ENCODE measurements at regions of chr3 and their contacts with region 1.

Region 1: GRCh38 chr3:155323063-155323666 is 29.7 kb upstream of the STRIT1 start:
- DNase-seq: peak in 1 of 2 donors; percentile 36
- ATAC-seq: peak; percentile 59 to 80 (median 66)
- H3K4me3 ChIP-seq: no peak overlapping the region
- H3K27ac ChIP-seq: no peak overlapping the region
- H3K4me1 ChIP-seq: no peaks in the 10 kb centered on the region
- H3K27me3 ChIP-seq: no peaks in the 10 kb centered on the region
- CTCF ChIP-seq: peak; percentile 34 to 79 (median 70)

Region 2: GRCh38 chr3:154334973-154335420 is 988.2 kb before region 1 on chr3:
- intact Hi-C with region 1: loop called (anchors 2 to 10 kb)
- DNase-seq: no peak
- ATAC-seq: no peak
- H3K4me3 ChIP-seq: no peak overlapping the region
- H3K27ac ChIP-seq: no peak overlapping the region
- H3K4me1 ChIP-seq: no peaks in the 10 kb centered on the region
- H3K27me3 ChIP-seq: peaks cover 0 to 2% (median 0%) of the 10 kb centered on the region in 7 donors
- CTCF ChIP-seq: peak; percentile 34 to 77 (median 69)

Region 3: DNA sequence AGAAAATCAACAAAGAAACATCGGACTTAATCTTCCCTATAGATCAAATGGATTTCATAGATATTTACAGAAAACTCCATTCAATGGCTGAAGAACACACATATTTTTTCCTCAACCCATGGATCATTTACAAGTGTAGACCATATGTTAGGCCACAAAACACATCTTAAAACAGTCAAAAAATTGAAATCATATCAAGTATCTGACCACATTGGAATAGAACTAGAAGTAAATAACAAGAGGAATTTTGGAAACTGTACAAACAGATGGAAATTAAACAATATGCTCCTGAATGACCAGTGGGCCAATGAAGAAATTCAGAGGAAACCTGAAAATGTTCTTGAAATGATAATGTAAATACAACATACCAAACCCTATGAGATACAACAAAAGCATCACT is 570.1 kb before region 1 on chr3:
- intact Hi-C with region 1: loop called (anchors 1 to 10 kb)
- DNase-seq: no peak
- ATAC-seq: no peak
- H3K4me3 ChIP-seq: no peak overlapping the region
- H3K27ac ChIP-seq: no peak overlapping the region
- H3K4me1 ChIP-seq: no peaks in the 10 kb centered on the region
- H3K27me3 ChIP-seq: no peaks in the 10 kb centered on the region
- CTCF ChIP-seq: no peak

Region 4: DNA sequence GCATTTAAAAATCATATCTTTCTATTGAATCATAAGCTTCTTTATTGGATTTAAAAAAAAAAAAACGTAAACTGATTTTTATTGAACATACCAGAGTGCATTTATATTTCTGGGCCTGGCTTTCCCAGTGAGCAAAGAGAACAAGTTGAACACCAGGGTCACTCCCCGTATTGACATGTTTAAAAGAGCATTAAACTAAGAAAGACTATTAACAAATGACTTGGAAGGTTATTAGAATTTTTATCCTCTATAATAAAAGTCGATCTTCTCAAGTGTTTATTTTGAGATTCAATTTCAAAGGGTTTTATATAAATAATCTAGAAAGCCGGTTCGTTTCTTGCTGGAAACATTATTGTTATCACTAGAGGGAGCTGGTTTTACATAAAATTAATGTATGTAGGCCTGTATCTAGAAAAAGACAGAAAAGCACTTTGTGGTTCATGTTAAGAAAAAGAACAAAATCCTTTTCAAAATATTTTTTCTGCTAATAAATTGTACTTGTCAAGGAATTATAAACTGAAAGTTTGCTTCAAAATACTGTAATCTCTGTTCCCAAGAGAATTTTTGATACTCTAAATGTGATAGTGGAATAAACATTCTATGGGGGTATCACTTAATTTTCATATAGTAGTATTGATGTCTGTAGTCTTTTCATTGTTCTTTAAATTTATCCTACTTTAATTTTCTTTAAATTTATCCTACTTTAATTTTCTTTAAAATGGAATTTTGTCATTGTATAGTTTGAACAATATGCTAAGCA is 564.9 kb before region 1 on chr3:
- intact Hi-C with region 1: loop called (anchors 1 to 10 kb)
- DNase-seq: no peak
- ATAC-seq: no peak
- H3K4me3 ChIP-seq: no peak overlapping the region
- H3K27ac ChIP-seq: no peak overlapping the region
- H3K4me1 ChIP-seq: no peaks in the 10 kb centered on the region
- H3K27me3 ChIP-seq: no peaks in the 10 kb centered on the region
- CTCF ChIP-seq: peak in 8 of 9 donors; percentile 31 to 71 (median 58)